Activated CD4-positive, alpha-beta T cell treated with anti-CD3 and anti-CD28 coated beads, Interleukin-2, amount 10 ng/mL, durations not matched to agents 7 days and 5 days (primary cell): ENCODE measurements at regions of chr21 and their contacts with region 1.

Region 1: DNA sequence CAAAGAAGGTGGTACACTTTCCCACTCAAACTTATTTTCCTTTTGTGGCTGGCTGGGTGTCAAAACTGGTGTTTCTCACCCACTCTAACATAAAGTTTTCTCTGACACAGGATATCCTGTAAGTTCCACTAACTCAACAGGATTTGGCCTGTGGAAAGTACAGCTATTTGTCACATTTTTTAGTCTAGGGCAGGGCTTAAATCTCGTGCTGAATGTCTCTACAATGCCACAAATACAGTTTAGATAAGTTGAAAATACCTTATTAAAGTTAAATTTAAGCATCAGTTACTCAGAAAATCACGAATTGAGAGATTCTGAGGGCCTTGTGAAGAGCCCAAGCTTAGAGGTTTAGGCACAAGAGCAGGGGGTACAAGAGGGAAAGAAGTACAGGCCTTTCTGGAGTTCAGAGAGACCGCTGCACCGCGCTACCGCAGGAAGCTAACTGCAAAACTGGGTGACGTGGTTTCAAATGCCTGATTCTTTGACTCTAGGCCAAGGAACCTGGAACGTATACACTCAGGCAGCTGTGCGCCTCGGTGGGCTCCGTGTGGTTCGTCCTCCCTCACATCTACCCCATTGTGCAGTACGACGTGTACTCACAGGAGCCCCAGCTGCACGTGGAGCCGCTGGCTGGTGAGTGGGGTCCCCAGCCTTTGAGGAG is 23.4 kb upstream of the PWP2 start:
- DNase-seq: peak; percentile 79
- H3K4me3 Mint-ChIP-seq: peak overlapping the region; percentile 68
- H3K27ac Mint-ChIP-seq: peak overlapping the region; percentile 98
- H3K4me1 Mint-ChIP-seq: peaks cover 92% of the 10 kb centered on the region
- H3K27me3 Mint-ChIP-seq: no peaks in the 10 kb centered on the region

Region 2: GRCh38 chr21:44065428-44065827 is 18.3 kb before region 1 on chr21:
- CTCF ChIA-PET with region 1: interaction called, 17 read pairs
- POLR2A ChIA-PET with region 1: interaction called, 3 read pairs
- DNase-seq: peak; percentile 87
- H3K4me3 Mint-ChIP-seq: peak overlapping the region; percentile 53
- H3K27ac Mint-ChIP-seq: peak overlapping the region; percentile 96
- H3K4me1 Mint-ChIP-seq: peaks cover 40% of the 10 kb centered on the region
- H3K27me3 Mint-ChIP-seq: no peaks in the 10 kb centered on the region